ENCODE measurements at regions of chr20 and their contacts with region 1.

Region 1: GRCh38 chr20:17525650-17526049 is 5.5 kb downstream of the BFSP1 start:
- DNase-seq: peak; percentile 76

Region 2: GRCh38 chr20:17327185-17328148 is 198.2 kb before region 1 on chr20:
- in situ Hi-C with region 1: no loop called
- DNase-seq: no peak

Region 3: GRCh38 chr20:17357218-17357617 is 168.4 kb before region 1 on chr20:
- in situ Hi-C with region 1: no loop called
- DNase-seq: no peak

Region 4: GRCh38 chr20:17568972-17569471 is 43.4 kb after region 1 on chr20:
- in situ Hi-C with region 1: no loop called
- DNase-seq: peak; percentile 88

Region 5: GRCh38 chr20:17654649-17655285 is 129.1 kb after region 1 on chr20:
- in situ Hi-C with region 1: no loop called
- DNase-seq: peak; percentile 71

Region 6: GRCh38 chr20:17904027-17904426 is 378.4 kb after region 1 on chr20:
- in situ Hi-C with region 1: loop called (anchors 10 kb)
- DNase-seq: no peak